ENCODE measurements at regions of chr5 and their contacts with region 1.

Region 1: DNA sequence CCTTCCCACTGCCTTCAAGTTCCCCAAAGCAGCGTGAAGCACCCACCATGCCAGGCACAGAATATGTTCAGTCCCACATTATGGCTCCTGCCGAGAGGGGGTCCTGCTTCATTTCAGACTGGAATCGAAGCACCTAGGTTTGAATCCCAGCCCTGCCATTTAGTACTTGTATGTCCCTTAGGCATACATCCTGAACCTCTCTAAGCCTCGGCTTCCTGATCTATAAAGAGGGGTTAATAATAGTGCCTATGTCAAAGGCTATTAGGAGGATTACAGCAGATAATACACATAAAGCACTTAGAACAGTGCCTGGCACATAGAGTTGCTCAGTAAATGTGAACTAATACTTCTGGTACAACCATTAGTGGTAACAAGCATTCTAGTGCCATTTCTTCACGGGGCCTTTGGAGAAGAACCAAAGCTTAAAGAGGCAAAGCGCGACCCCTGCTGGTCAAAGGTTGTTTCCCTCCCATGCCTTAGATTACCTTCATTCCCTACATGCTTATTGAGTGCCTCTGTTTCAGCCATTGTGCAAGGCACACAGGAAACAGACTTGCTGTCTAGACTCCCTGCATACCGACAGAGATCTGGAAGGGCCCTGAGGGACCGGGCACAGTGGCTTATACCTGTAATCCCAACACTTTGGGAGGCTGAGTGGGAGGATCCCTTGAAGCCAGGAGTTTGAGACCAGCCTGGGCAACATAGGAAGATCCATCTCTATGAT is 98.2 kb downstream of the PPARGC1B start:
- DNase-seq: peak; percentile 89
- ATAC-seq: peak; percentile 71
- H3K4me3 Mint-ChIP-seq: no peak overlapping the region
- H3K27ac Mint-ChIP-seq: no peak overlapping the region
- H3K4me1 Mint-ChIP-seq: peaks cover 5% of the 10 kb centered on the region
- H3K27me3 Mint-ChIP-seq: no peaks in the 10 kb centered on the region

Region 2: DNA sequence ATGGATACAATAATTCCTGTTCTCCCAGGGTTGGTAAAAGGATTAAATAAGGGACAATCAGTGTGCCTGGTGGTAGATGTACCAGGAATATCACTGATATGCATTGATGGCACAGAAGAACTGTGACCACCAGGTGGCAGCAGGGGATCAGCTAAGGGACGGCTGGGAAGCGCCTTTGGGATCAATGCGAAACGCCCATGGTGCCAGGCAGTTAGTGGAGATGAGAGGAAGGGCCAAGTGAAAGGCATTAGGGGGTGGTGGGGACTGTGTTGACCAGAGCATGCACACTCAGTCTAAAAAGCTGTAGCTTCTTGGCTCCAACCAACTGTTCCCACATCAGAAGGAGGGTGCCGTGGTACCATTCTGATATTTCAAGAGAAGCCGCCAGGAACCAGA is 191.5 kb before region 1 on chr5:
- CTCF ChIA-PET with region 1: interaction called, 73 read pairs
- POLR2A ChIA-PET with region 1: no interaction called
- DNase-seq: peak; percentile 65
- ATAC-seq: peak; percentile 72
- H3K4me3 Mint-ChIP-seq: no peak overlapping the region
- H3K27ac Mint-ChIP-seq: no peak overlapping the region
- H3K4me1 Mint-ChIP-seq: peaks cover 7% of the 10 kb centered on the region
- H3K27me3 Mint-ChIP-seq: no peaks in the 10 kb centered on the region

Region 3: DNA sequence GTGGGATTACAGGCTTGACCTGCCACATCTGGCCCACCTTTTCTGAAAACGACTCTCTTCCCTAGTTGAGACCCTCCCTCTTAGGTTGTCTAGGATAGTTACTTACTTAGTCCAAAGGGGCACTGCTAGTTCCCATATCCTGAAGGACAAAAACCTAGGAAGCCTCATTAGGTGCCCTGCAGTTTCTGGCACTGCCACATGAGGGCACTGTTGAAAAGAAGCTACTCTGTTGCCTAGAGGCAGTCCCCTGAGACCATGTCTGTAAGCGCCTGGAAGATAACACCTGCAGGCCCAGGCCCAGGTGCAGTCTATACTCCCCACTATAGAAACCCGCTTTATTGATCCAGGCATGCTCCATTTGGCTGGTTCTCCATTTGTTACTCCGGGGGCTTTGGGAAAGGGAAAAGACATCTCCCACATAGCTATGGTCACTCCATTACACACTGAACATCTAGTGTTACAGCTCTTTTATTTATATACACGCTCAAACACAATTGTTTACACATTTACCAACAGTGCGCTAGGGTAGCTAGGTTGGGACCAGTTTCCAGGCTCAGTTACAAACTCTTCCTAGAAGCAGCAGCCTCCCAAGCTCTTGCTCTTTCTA is 171.6 kb before region 1 on chr5:
- CTCF ChIA-PET with region 1: interaction called, 26 read pairs
- POLR2A ChIA-PET with region 1: no interaction called
- DNase-seq: peak; percentile 44
- ATAC-seq: no peak
- H3K4me3 Mint-ChIP-seq: no peak overlapping the region
- H3K27ac Mint-ChIP-seq: no peak overlapping the region
- H3K4me1 Mint-ChIP-seq: no peaks in the 10 kb centered on the region
- H3K27me3 Mint-ChIP-seq: peaks cover 4% of the 10 kb centered on the region

Region 4: GRCh38 chr5:149816661-149817060 is 11.7 kb before region 1 on chr5:
- CTCF ChIA-PET with region 1: interaction called, 14 read pairs
- POLR2A ChIA-PET with region 1: no interaction called
- DNase-seq: no peak
- ATAC-seq: no peak
- H3K4me3 Mint-ChIP-seq: no peak overlapping the region
- H3K27ac Mint-ChIP-seq: no peak overlapping the region
- H3K4me1 Mint-ChIP-seq: no peaks in the 10 kb centered on the region
- H3K27me3 Mint-ChIP-seq: no peaks in the 10 kb centered on the region

Region 5: GRCh38 chr5:149852641-149853330 is 24.5 kb after region 1 on chr5:
- CTCF ChIA-PET with region 1: interaction called, 163 read pairs
- POLR2A ChIA-PET with region 1: no interaction called
- DNase-seq: peak; percentile 59
- ATAC-seq: peak; percentile 73
- H3K4me3 Mint-ChIP-seq: no peak overlapping the region
- H3K27ac Mint-ChIP-seq: no peak overlapping the region
- H3K4me1 Mint-ChIP-seq: no peaks in the 10 kb centered on the region
- H3K27me3 Mint-ChIP-seq: no peaks in the 10 kb centered on the region

Region 6: DNA sequence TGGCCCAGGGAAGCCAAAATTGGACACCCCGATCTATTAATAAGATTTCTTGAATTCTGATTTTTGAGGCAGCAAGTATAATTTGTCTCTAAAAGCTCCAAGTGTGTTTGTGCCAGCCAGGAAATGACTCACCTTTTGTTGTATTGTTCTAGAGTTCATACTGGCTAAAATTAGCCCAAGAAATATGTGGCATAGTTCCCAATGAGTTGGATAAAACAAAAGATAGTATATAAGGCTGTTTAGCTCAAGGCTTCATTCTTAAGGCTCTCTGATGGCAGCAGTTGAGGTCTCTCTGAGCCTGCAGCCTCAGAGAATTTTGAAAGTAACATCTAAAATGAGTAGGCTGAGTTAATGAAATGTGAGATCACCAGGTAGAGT is 193.8 kb after region 1 on chr5:
- CTCF ChIA-PET with region 1: no interaction called
- POLR2A ChIA-PET with region 1: no interaction called
- DNase-seq: no peak
- ATAC-seq: no peak
- H3K4me3 Mint-ChIP-seq: no peak overlapping the region
- H3K27ac Mint-ChIP-seq: peak overlapping the region; percentile 20
- H3K4me1 Mint-ChIP-seq: peaks cover 25% of the 10 kb centered on the region
- H3K27me3 Mint-ChIP-seq: no peaks in the 10 kb centered on the region